ENCODE measurements at regions of chr9 and their contacts with region 1.

Region 1: DNA sequence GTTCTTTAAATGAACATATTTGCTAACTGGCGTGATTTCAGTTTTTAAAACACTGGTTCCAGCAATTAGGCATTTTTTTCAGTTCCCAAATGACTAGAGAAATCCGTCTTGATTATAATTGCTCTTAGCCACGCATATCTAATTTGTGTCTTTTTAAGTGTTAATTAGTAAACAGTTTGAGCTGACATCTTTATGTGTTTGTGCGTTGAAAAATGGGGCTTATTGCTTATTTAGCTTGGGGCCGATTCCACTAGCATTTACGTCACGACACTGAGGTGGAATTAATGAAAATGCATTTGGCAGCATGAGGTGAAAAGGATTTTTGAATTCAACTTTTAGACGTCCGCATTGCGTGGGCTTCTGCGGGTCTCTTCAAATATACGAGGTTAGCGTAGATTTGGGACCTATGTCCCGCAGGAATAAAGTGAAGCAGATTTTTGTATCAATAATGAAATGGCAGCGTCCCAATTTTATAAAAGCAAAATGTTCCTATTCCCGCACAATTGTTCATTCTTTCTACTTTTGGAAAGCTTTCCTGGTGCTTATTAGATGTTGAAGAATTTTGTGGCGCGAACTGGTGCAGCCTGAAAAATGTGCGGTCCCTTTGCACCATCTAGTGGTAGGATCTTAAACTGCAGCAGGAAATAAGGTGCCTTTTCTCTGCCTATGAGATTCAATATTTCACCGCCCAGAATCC is 122.7 kb upstream of the LMX1B start:
- DNase-seq: peak in 7 of 9 donors; percentile 33 to 81 (median 66)
- ATAC-seq: peak; percentile 77
- H3K4me3 ChIP-seq: no peak overlapping the region
- H3K4me3 Mint-ChIP-seq: peak overlapping the region in 4 of 10 donors; percentile 13 to 66 (median 46)
- H3K27ac ChIP-seq: no peak overlapping the region
- H3K27ac Mint-ChIP-seq: no peak overlapping the region
- H3K4me1 ChIP-seq: peaks cover 5 to 6% of the 10 kb centered on the region in 2 donors
- H3K4me1 Mint-ChIP-seq: peaks cover 0 to 13% (median 6%) of the 10 kb centered on the region in 7 donors
- H3K27me3 ChIP-seq: no peaks in the 10 kb centered on the region
- H3K27me3 Mint-ChIP-seq: peaks cover 0 to 35% (median 0%) of the 10 kb centered on the region in 5 donors

Region 2: GRCh38 chr9:125407974-125408900 is 1082.8 kb before region 1 on chr9:
- CTCF ChIA-PET with region 1: interaction called, 3 read pairs
- POLR2A ChIA-PET with region 1: no interaction called
- intact Hi-C with region 1: loop called (anchors 1 kb)
- DNase-seq: peak; percentile 33 to 85 (median 69)
- ATAC-seq: peak; percentile 76
- H3K4me3 ChIP-seq: peak overlapping the region; percentile 41
- H3K4me3 Mint-ChIP-seq: peak overlapping the region; percentile 64 to 85 (median 72)
- H3K27ac ChIP-seq: no peak overlapping the region
- H3K27ac Mint-ChIP-seq: no peak overlapping the region
- H3K4me1 ChIP-seq: no peaks in the 10 kb centered on the region
- H3K4me1 Mint-ChIP-seq: peaks cover 0 to 15% (median 13%) of the 10 kb centered on the region in 7 donors
- H3K27me3 ChIP-seq: no peaks in the 10 kb centered on the region
- H3K27me3 Mint-ChIP-seq: peaks cover 15 to 38% (median 17%) of the 10 kb centered on the region in 5 donors

Region 3: GRCh38 chr9:126146254-126147145 is 344.5 kb before region 1 on chr9:
- CTCF ChIA-PET with region 1: no interaction called
- POLR2A ChIA-PET with region 1: no interaction called
- intact Hi-C with region 1: loop called (anchors 2 to 5 kb)
- DNase-seq: peak in 4 of 9 donors; percentile 1 to 11 (median 8)
- ATAC-seq: peak; percentile 42
- H3K4me3 ChIP-seq: no peak overlapping the region
- H3K4me3 Mint-ChIP-seq: peak overlapping the region in 2 of 10 donors; percentile 4 to 35
- H3K27ac ChIP-seq: no peak overlapping the region
- H3K27ac Mint-ChIP-seq: no peak overlapping the region
- H3K4me1 ChIP-seq: no peaks in the 10 kb centered on the region
- H3K4me1 Mint-ChIP-seq: peaks cover 0 to 9% (median 4%) of the 10 kb centered on the region in 7 donors
- H3K27me3 ChIP-seq: no peaks in the 10 kb centered on the region
- H3K27me3 Mint-ChIP-seq: peaks cover 31 to 50% (median 36%) of the 10 kb centered on the region in 5 donors

Region 4: GRCh38 chr9:126301985-126302603 is 188.9 kb before region 1 on chr9:
- CTCF ChIA-PET with region 1: interaction called, 30 read pairs
- POLR2A ChIA-PET with region 1: no interaction called
- intact Hi-C with region 1: loop called (anchors 1 kb)
- DNase-seq: peak in 7 of 9 donors; percentile 33 to 68 (median 58)
- ATAC-seq: peak; percentile 79
- H3K4me3 ChIP-seq: no peak overlapping the region
- H3K4me3 Mint-ChIP-seq: no peak overlapping the region
- H3K27ac ChIP-seq: no peak overlapping the region
- H3K27ac Mint-ChIP-seq: peak overlapping the region in 1 of 9 donors; percentile 6
- H3K4me1 ChIP-seq: no peaks in the 10 kb centered on the region
- H3K4me1 Mint-ChIP-seq: peaks cover 3 to 8% (median 5%) of the 10 kb centered on the region in 7 donors
- H3K27me3 ChIP-seq: no peaks in the 10 kb centered on the region
- H3K27me3 Mint-ChIP-seq: peaks cover 0 to 4% (median 0%) of the 10 kb centered on the region in 5 donors

Region 5: GRCh38 chr9:126398403-126399058 is 92.5 kb before region 1 on chr9:
- CTCF ChIA-PET with region 1: interaction called, 21 read pairs
- POLR2A ChIA-PET with region 1: no interaction called
- intact Hi-C with region 1: loop called (anchors 1 kb)
- DNase-seq: peak; percentile 38 to 83 (median 62)
- ATAC-seq: peak; percentile 63
- H3K4me3 ChIP-seq: no peak overlapping the region
- H3K4me3 Mint-ChIP-seq: peak overlapping the region in 9 of 10 donors; percentile 31 to 77 (median 61)
- H3K27ac ChIP-seq: no peak overlapping the region
- H3K27ac Mint-ChIP-seq: peak overlapping the region in 8 of 9 donors; percentile 34 to 91 (median 66)
- H3K4me1 ChIP-seq: peaks cover 22 to 28% of the 10 kb centered on the region in 2 donors
- H3K4me1 Mint-ChIP-seq: peaks cover 20 to 57% (median 36%) of the 10 kb centered on the region in 7 donors
- H3K27me3 ChIP-seq: no peaks in the 10 kb centered on the region
- H3K27me3 Mint-ChIP-seq: peaks cover 0 to 16% (median 0%) of the 10 kb centered on the region in 5 donors

Region 6: GRCh38 chr9:126464694-126465441 is 26.2 kb before region 1 on chr9:
- CTCF ChIA-PET with region 1: interaction called, 11 read pairs
- POLR2A ChIA-PET with region 1: interaction called, 4 read pairs
- intact Hi-C with region 1: no loop called
- DNase-seq: no peak
- ATAC-seq: no peak
- H3K4me3 ChIP-seq: no peak overlapping the region
- H3K4me3 Mint-ChIP-seq: no peak overlapping the region
- H3K27ac ChIP-seq: no peak overlapping the region
- H3K27ac Mint-ChIP-seq: peak overlapping the region in 1 of 9 donors; percentile 36
- H3K4me1 ChIP-seq: peaks cover 16 to 18% of the 10 kb centered on the region in 2 donors
- H3K4me1 Mint-ChIP-seq: peaks cover 24 to 34% (median 29%) of the 10 kb centered on the region in 7 donors
- H3K27me3 ChIP-seq: no peaks in the 10 kb centered on the region
- H3K27me3 Mint-ChIP-seq: peaks cover 0 to 47% (median 0%) of the 10 kb centered on the region in 5 donors

Region 7: DNA sequence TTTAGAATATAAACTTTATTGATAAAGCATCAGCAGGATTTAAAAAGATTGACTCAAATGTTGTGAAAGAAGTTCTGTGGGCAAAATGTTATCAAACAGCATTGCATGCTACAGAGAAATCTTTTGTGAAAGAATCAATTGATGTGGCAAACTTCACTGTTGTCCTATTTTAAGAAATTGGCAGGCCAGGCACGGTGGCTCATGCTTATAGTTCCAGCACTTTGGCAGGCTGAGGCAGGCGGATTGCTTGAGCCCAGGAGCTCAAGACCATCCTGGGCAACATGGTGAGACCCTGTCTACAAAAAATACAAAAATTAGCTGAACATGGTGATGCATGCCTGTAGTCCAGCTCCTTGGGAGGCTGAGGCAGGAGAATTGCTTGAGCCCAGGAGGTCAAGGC is 331.3 kb after region 1 on chr9:
- CTCF ChIA-PET with region 1: no interaction called
- POLR2A ChIA-PET with region 1: no interaction called
- intact Hi-C with region 1: no loop called
- DNase-seq: no peak
- ATAC-seq: no peak
- H3K4me3 ChIP-seq: no peak overlapping the region
- H3K4me3 Mint-ChIP-seq: peak overlapping the region in 1 of 10 donors; percentile 9
- H3K27ac ChIP-seq: no peak overlapping the region
- H3K27ac Mint-ChIP-seq: peak overlapping the region in 2 of 9 donors; percentile 5 to 6
- H3K4me1 ChIP-seq: no peaks in the 10 kb centered on the region
- H3K4me1 Mint-ChIP-seq: peaks cover 17 to 48% (median 36%) of the 10 kb centered on the region in 7 donors
- H3K27me3 ChIP-seq: no peaks in the 10 kb centered on the region
- H3K27me3 Mint-ChIP-seq: no peaks in the 10 kb centered on the region